ENCODE measurements at regions of chr2 and their contacts with region 1.

Region 1: GRCh38 chr2:175880-176800 is 87.7 kb downstream of the SH3YL1 start:
- DNase-seq: peak in 7 of 9 donors; percentile 52 to 81 (median 77)
- ATAC-seq: peak; percentile 98
- H3K4me3 ChIP-seq: peak overlapping the region; percentile 40
- H3K4me3 Mint-ChIP-seq: peak overlapping the region; percentile 65 to 79 (median 74)
- H3K27ac ChIP-seq: peak overlapping the region; percentile 60
- H3K27ac Mint-ChIP-seq: peak overlapping the region; percentile 54 to 98 (median 87)
- H3K4me1 ChIP-seq: peaks cover 33 to 35% of the 10 kb centered on the region in 2 donors
- H3K4me1 Mint-ChIP-seq: peaks cover 22 to 55% (median 48%) of the 10 kb centered on the region in 7 donors
- H3K27me3 ChIP-seq: no peaks in the 10 kb centered on the region
- H3K27me3 Mint-ChIP-seq: peaks cover 0 to 30% (median 0%) of the 10 kb centered on the region in 5 donors

Region 2: GRCh38 chr2:201648-202433 is 25.7 kb after region 1 on chr2:
- CTCF ChIA-PET with region 1: interaction called, 10 read pairs
- POLR2A ChIA-PET with region 1: interaction called, 21 read pairs
- intact Hi-C with region 1: loop called in 1 of 2 experiments (anchors 1 kb)
- DNase-seq: no peak
- ATAC-seq: no peak
- H3K4me3 ChIP-seq: no peak overlapping the region
- H3K4me3 Mint-ChIP-seq: peak overlapping the region in 8 of 10 donors; percentile 12 to 84 (median 76)
- H3K27ac ChIP-seq: peak overlapping the region; percentile 39
- H3K27ac Mint-ChIP-seq: peak overlapping the region in 7 of 9 donors; percentile 66 to 93 (median 87)
- H3K4me1 ChIP-seq: peaks cover 0 to 4% of the 10 kb centered on the region in 2 donors
- H3K4me1 Mint-ChIP-seq: peaks cover 0 to 36% (median 25%) of the 10 kb centered on the region in 7 donors
- H3K27me3 ChIP-seq: no peaks in the 10 kb centered on the region
- H3K27me3 Mint-ChIP-seq: peaks cover 0 to 3% (median 0%) of the 10 kb centered on the region in 5 donors

Region 3: GRCh38 chr2:246489-247144 is 70.5 kb after region 1 on chr2:
- CTCF ChIA-PET with region 1: interaction called, 3 read pairs
- POLR2A ChIA-PET with region 1: no interaction called
- intact Hi-C with region 1: loop called in 1 of 2 experiments (anchors 2 kb)
- DNase-seq: peak in 7 of 9 donors; percentile 21 to 57 (median 49)
- ATAC-seq: peak; percentile 57
- H3K4me3 ChIP-seq: no peak overlapping the region
- H3K4me3 Mint-ChIP-seq: no peak overlapping the region
- H3K27ac ChIP-seq: no peak overlapping the region
- H3K27ac Mint-ChIP-seq: peak overlapping the region in 3 of 9 donors; percentile 7 to 34 (median 24)
- H3K4me1 ChIP-seq: no peaks in the 10 kb centered on the region
- H3K4me1 Mint-ChIP-seq: peaks cover 4 to 9% (median 7%) of the 10 kb centered on the region in 7 donors
- H3K27me3 ChIP-seq: no peaks in the 10 kb centered on the region
- H3K27me3 Mint-ChIP-seq: no peaks in the 10 kb centered on the region

Region 4: GRCh38 chr2:290090-290722 is 114.1 kb after region 1 on chr2:
- CTCF ChIA-PET with region 1: interaction called, 7 read pairs
- POLR2A ChIA-PET with region 1: no interaction called
- intact Hi-C with region 1: loop called in 1 of 2 experiments (anchors 1 kb)
- DNase-seq: peak; percentile 20 to 57 (median 45)
- ATAC-seq: peak; percentile 60
- H3K4me3 ChIP-seq: peak overlapping the region; percentile 55
- H3K4me3 Mint-ChIP-seq: peak overlapping the region; percentile 76 to 90 (median 84)
- H3K27ac ChIP-seq: no peak overlapping the region
- H3K27ac Mint-ChIP-seq: no peak overlapping the region
- H3K4me1 ChIP-seq: peaks cover 10 to 12% of the 10 kb centered on the region in 2 donors
- H3K4me1 Mint-ChIP-seq: peaks cover 0 to 16% (median 8%) of the 10 kb centered on the region in 7 donors
- H3K27me3 ChIP-seq: peaks cover 2 to 8% of the 10 kb centered on the region in 2 donors
- H3K27me3 Mint-ChIP-seq: peaks cover 24 to 53% (median 41%) of the 10 kb centered on the region in 5 donors

Region 5: GRCh38 chr2:359047-359446 is 182.9 kb after region 1 on chr2:
- CTCF ChIA-PET with region 1: no interaction called
- POLR2A ChIA-PET with region 1: no interaction called
- intact Hi-C with region 1: no loop called
- DNase-seq: no peak
- ATAC-seq: no peak
- H3K4me3 ChIP-seq: no peak overlapping the region
- H3K4me3 Mint-ChIP-seq: no peak overlapping the region
- H3K27ac ChIP-seq: no peak overlapping the region
- H3K27ac Mint-ChIP-seq: no peak overlapping the region
- H3K4me1 ChIP-seq: no peaks in the 10 kb centered on the region
- H3K4me1 Mint-ChIP-seq: no peaks in the 10 kb centered on the region
- H3K27me3 ChIP-seq: no peaks in the 10 kb centered on the region
- H3K27me3 Mint-ChIP-seq: peaks cover 14 to 47% (median 34%) of the 10 kb centered on the region in 5 donors

Region 6: DNA sequence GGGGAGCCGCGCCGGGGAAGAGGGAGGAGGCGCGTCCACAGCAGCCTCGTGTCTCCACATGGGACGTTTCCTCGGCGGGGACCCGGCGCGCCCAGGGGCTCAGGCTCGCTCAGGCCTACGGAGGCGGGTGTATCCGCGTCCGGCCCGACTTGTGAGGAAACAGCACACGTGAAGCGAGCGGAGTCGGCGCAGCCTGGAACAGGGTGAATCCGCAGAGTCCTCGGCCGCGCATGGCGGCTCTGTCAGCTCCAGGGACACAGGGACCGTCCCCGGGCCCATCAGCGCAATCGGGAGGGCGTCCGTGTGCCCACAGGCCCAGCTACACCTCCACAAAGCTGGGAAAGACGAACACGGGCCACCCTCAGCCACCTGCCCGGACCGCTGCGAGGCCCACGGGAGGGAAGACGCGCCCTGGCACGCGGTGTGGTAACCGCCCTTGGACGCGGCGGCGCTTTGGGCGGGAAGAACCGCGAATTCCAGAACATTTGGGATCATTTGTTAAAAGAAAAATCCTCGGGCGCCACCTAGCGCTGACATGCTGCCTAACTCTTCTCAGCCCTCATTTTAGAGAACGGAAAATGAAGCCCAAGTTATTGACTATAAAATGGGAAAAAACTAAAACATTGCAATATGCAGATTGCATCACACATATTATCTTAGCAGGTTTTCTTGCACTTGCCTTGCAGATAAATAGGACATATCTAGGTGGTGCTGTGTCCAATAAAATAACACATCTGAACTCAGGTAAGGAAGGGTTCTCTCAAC is 460.7 kb after region 1 on chr2:
- CTCF ChIA-PET with region 1: interaction called, 3 read pairs
- POLR2A ChIA-PET with region 1: no interaction called
- intact Hi-C with region 1: loop called (anchors 1 to 2 kb)
- DNase-seq: peak; percentile 27 to 66 (median 45)
- ATAC-seq: peak; percentile 72
- H3K4me3 ChIP-seq: peak overlapping the region; percentile 62
- H3K4me3 Mint-ChIP-seq: peak overlapping the region; percentile 78 to 90 (median 84)
- H3K27ac ChIP-seq: peak overlapping the region; percentile 59
- H3K27ac Mint-ChIP-seq: peak overlapping the region in 8 of 9 donors; percentile 2 to 86 (median 74)
- H3K4me1 ChIP-seq: no peaks in the 10 kb centered on the region
- H3K4me1 Mint-ChIP-seq: peaks cover 0 to 5% (median 0%) of the 10 kb centered on the region in 7 donors
- H3K27me3 ChIP-seq: no peaks in the 10 kb centered on the region
- H3K27me3 Mint-ChIP-seq: peaks cover 0 to 7% (median 0%) of the 10 kb centered on the region in 5 donors

Measured in naive thymus-derived CD4-positive, alpha-beta T cell (primary cell).